PC-9 (cell line): ENCODE measurements at regions of chr4 and their contacts with region 1.

Region 1: DNA sequence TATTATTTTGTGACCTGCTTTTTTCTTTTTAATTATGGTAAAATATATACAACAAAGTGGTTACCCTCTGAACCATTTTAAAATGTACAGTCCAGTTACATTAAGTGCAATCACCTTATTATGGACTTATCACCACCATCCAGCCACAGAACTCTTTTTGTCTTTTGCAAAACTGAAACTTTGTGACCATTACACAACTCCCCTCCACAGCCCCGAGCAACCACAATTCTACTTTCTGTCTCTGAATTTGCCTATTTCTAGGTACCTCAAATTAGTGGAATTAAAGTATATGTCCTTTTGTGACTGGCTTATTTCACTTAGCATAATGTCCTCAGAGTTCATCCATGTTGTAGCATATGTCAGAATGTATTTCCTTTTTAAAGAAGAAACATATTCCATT is 39.3 kb upstream of the WWC2 start:
- DNase-seq: no peak
- H3K4me3 ChIP-seq: no peak overlapping the region
- H3K27ac ChIP-seq: no peak overlapping the region
- H3K4me1 ChIP-seq: no peaks in the 10 kb centered on the region
- H3K27me3 ChIP-seq: no peaks in the 10 kb centered on the region
- CTCF ChIP-seq: no peak

Region 2: GRCh38 chr4:183256756-183257385 is 197.1 kb after region 1 on chr4:
- CTCF ChIA-PET with region 1: interaction called, 14 read pairs
- POLR2A ChIA-PET with region 1: no interaction called
- intact Hi-C with region 1: no loop called
- DNase-seq: peak in 1 of 2 experiments; percentile 27
- H3K4me3 ChIP-seq: no peak overlapping the region
- H3K27ac ChIP-seq: no peak overlapping the region
- H3K4me1 ChIP-seq: no peaks in the 10 kb centered on the region
- H3K27me3 ChIP-seq: no peaks in the 10 kb centered on the region
- CTCF ChIP-seq: peak; percentile 50

Region 3: GRCh38 chr4:184553896-184554295 is 1494.1 kb after region 1 on chr4:
- CTCF ChIA-PET with region 1: no interaction called
- POLR2A ChIA-PET with region 1: no interaction called
- intact Hi-C with region 1: no loop called
- DNase-seq: no peak
- H3K4me3 ChIP-seq: no peak overlapping the region
- H3K27ac ChIP-seq: no peak overlapping the region
- H3K4me1 ChIP-seq: no peaks in the 10 kb centered on the region
- H3K27me3 ChIP-seq: no peaks in the 10 kb centered on the region
- CTCF ChIP-seq: no peak